GM10248 (cell line): ENCODE measurements at regions of chr1 and their contacts with region 1.

Region 1: DNA sequence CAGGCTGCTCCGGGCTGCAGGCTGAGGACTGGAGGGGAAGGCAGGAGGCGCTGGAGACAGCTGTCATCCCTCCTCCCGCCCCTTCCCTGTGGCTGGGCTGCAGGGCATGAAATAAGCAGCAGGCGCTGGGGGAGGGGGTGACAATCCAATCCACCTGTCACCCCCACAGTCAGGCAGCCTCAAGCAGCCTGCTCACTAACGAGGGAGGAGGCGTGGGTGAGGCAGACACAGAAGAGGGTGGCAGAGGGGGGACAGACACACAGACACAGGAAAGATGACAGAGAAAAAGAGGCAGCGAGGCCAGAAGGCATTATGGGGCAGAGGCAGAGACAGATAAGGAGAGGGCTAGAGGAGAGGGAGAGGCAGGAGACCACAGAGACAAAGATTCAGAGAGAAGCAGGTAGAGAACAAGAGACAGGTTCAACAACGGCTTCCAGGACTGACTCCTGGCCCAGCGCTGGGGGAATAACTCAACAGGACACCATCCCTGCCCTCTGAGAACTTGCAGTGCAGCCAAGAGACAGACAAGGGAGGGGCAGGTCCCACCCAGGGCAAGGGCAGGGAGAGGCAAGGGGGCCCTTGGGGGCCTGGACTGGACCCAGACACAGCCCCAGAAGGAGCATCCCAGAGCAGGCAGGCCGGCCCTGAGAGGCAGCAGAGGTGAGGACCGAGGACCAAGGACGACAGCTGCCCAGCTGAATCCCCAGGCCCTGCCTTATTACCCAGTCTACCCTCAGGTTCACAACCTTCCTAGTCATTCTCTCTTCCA is 11.2 kb downstream of the MEF2D start:
- DNase-seq: no peak
- CTCF ChIP-seq: no peak

Region 2: DNA sequence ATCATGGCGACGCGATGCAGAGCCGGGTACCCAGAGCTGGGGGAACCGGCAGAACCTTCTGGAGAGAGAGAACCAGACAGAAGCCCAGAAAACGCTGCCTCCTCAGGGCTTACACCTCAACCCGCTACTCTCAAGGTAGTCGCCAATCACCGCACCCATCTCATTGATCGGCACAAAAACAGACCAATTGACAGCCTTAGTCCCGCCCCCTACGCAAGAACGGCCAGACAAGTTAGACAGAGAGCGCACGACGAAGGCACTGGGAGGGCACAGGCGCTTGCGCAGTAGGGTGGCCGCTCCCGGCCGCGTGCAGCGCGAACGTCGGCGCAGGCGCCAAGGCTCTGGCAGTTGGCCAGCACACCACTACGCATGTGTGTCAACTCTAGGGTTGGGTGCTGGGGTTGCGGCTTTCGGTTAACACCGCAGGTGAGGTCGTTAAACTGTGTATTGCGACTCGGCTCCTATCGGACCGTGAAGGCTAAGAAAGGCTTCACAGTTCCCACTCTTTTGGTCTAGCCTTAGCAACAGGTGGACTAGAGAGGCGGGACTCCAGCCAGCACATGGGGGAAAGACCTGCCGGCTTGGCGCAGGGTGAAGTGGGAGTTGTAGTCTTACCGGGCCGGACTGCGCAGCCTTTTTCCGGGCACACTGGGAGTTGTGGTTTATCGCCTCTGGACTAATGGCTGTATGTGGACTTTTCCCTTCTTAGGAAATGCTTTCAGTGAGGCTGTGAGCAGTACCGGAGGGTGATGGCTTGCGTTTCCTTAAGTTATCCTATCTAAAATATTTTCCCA is 151.0 kb before region 1 on chr1 and contains the starts of genes CCT3 and TSACC:
- CTCF ChIA-PET with region 1: no interaction called
- POLR2A ChIA-PET with region 1: no interaction called
- DNase-seq: peak; percentile 98
- CTCF ChIP-seq: no peak

Region 3: DNA sequence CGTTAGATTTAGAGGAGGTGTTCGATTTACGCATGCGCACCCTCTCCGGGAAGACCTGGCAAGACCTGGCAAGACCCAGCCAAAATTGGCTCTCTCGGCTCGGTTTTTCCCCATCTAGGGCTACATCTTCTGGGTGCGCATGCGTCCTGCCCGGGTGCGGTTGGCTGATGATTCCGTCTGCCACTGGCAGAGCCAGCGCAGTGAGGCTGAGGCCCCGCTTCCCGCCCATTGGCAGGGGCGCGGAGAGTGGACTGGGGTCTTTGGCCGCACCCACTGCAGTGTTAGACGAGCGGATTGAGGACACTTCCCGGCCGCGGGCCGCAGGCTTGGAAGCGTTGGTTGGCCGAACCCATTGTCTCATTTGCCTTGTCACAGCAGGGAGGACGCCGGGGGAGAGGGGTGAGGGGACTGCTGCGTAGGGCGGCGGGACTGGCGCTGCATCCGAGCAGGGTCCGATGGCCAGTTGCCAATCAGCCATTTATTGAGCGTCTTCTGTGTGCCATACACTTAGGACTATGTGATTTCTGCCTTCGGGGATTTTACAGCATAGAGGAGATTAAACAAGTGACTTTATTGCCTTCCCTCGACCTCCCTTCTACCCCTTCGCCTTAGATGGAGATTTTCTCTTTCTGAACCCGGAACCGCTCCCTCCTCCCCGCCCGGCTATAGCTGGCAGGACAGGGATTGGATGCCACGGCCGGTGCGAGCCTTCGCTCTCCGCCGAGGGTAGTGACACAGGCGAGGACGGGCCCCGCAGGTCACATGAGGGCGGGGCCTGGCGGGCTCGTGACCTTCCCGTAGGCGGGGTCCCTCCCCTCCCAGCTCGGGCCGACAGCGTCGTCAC is 32.5 kb before region 1 on chr1:
- CTCF ChIA-PET with region 1: interaction called, 12 read pairs
- POLR2A ChIA-PET with region 1: interaction called, 15 read pairs
- DNase-seq: peak; percentile 98
- CTCF ChIP-seq: no peak

Region 4: GRCh38 chr1:156961709-156962108 is 472.4 kb after region 1 on chr1:
- CTCF ChIA-PET with region 1: no interaction called
- POLR2A ChIA-PET with region 1: no interaction called
- DNase-seq: no peak
- CTCF ChIP-seq: peak; percentile 11